ENCODE measurements at regions of chr7 and their contacts with region 1.

Region 1: GRCh38 chr7:120996333-120996987 is 7.9 kb downstream of the CPED1 start:
- DNase-seq: peak; percentile 85
- H3K4me3 ChIP-seq: no peak overlapping the region
- CTCF ChIP-seq: no peak

Region 2: GRCh38 chr7:121076350-121077164 is 80.1 kb after region 1 on chr7:
- in situ Hi-C with region 1: loop called (anchors 10 kb)
- DNase-seq: peak; percentile 39
- H3K4me3 ChIP-seq: no peak overlapping the region
- CTCF ChIP-seq: no peak

Region 3: GRCh38 chr7:121329191-121330052 is 333.0 kb after region 1 on chr7:
- in situ Hi-C with region 1: loop called (anchors 10 kb)
- DNase-seq: no peak
- H3K4me3 ChIP-seq: peak overlapping the region; percentile 53
- CTCF ChIP-seq: peak; percentile 17